ENCODE measurements at regions of chr11 and their contacts with region 1.

Region 1: GRCh38 chr11:104876861-104877431 is 21.3 kb downstream of the CASP12 start:
- DNase-seq: no peak
- H3K4me3 Mint-ChIP-seq: peak overlapping the region; percentile 3
- H3K27ac Mint-ChIP-seq: peak overlapping the region; percentile 23
- H3K4me1 Mint-ChIP-seq: peaks cover 31% of the 10 kb centered on the region
- H3K27me3 Mint-ChIP-seq: no peaks in the 10 kb centered on the region

Region 2: GRCh38 chr11:104866820-104867219 is 10.1 kb before region 1 on chr11:
- CTCF ChIA-PET with region 1: no interaction called
- POLR2A ChIA-PET with region 1: no interaction called
- intact Hi-C with region 1: no loop called
- DNase-seq: no peak
- H3K4me3 Mint-ChIP-seq: no peak overlapping the region
- H3K27ac Mint-ChIP-seq: no peak overlapping the region
- H3K4me1 Mint-ChIP-seq: no peaks in the 10 kb centered on the region
- H3K27me3 Mint-ChIP-seq: no peaks in the 10 kb centered on the region

Region 3: DNA sequence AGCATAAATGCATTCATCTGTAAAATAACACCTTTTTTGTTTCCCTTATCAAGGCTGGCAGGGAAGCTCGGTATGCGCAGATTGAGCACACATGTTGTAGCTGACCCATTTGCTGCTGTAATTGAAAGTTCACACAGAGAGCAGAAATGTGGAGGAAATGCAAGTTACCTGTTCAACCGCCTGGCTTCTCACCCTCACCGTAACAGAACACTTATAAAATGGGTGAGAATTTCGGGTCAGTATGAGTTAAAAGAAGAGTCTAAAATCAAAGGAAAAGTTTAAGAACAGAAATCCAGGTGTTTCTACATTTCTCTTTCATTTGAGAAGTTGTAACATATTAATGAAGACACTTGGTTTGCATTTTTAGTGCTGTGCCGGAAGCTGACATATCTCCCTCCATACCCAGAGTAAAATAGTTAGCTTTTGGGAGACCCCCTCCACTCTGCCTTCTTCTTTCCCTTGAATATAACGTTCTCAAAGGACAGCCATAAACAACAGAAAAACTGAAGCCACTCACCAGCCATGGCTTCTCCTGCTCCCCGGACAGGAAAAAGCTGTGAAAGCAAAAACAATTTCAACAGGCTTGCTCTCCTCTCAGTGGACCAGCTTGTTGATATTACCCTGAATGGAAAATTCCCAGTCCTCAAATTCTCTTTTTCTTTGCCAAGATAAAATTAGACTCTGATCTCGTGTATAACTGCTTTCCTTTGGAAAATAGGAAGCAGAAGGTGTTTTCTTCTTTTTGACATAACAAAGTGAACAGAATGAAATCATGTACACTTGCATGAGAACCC is 21.1 kb after region 1 on chr11 and contains the start of gene CASP12:
- CTCF ChIA-PET with region 1: no interaction called
- POLR2A ChIA-PET with region 1: interaction called, 3 read pairs
- intact Hi-C with region 1: loop called (anchors 1 kb)
- DNase-seq: peak; percentile 33
- H3K4me3 Mint-ChIP-seq: peak within 1 kb of the TSS; percentile 74
- H3K27ac Mint-ChIP-seq: peak within 1 kb of the TSS; percentile 81
- H3K4me1 Mint-ChIP-seq: peaks cover 30% of the 10 kb centered on the region
- H3K27me3 Mint-ChIP-seq: no peaks in the 10 kb centered on the region
- total RNA-seq, gene CASP12: not detected

Region 4: GRCh38 chr11:104908186-104908531 is 31.2 kb after region 1 on chr11:
- CTCF ChIA-PET with region 1: no interaction called
- POLR2A ChIA-PET with region 1: no interaction called
- intact Hi-C with region 1: no loop called
- DNase-seq: no peak
- H3K4me3 Mint-ChIP-seq: no peak overlapping the region
- H3K27ac Mint-ChIP-seq: peak overlapping the region; percentile 76
- H3K4me1 Mint-ChIP-seq: peaks cover 32% of the 10 kb centered on the region
- H3K27me3 Mint-ChIP-seq: no peaks in the 10 kb centered on the region

Region 5: GRCh38 chr11:105000797-105001196 is 123.9 kb after region 1 on chr11:
- CTCF ChIA-PET with region 1: no interaction called
- POLR2A ChIA-PET with region 1: no interaction called
- intact Hi-C with region 1: no loop called
- DNase-seq: peak; percentile 74
- H3K4me3 Mint-ChIP-seq: no peak overlapping the region
- H3K27ac Mint-ChIP-seq: no peak overlapping the region
- H3K4me1 Mint-ChIP-seq: peaks cover 5% of the 10 kb centered on the region
- H3K27me3 Mint-ChIP-seq: no peaks in the 10 kb centered on the region